H1 (cell line): ENCODE measurements at regions of chr15 and their contacts with region 1.

Region 1: GRCh38 chr15:71386448-71387236 is 271.4 kb downstream of the THSD4 start:
- DNase-seq: no peak
- H3K4me3 ChIP-seq: peak overlapping the region in 1 of 4 experiments; percentile 30; a peak in 3 of 8 replicates
- H3K27ac ChIP-seq: peak overlapping the region; percentile 5; the same call in 1 of the 2 replicates
- H3K4me1 ChIP-seq: peaks cover 15 to 24% (median 19%) of the 10 kb centered on the region in 4 experiments; a peak in 6 of 7 replicates
- H3K27me3 ChIP-seq: no peaks in the 10 kb centered on the region
- CTCF ChIP-seq: peak in 1 of 3 experiments; percentile 42; a peak in 1 of 4 replicates
- EP300 ChIP-seq: peak in 1 of 2 experiments; percentile 47; a peak in 1 of 3 replicates
- POLR2A ChIP-seq: no peak; a peak in 1 of 3 replicates
- RAD21 ChIP-seq: peak; percentile 72 to 75

Region 2: GRCh38 chr15:71349736-71350526 is 36.7 kb before region 1 on chr15:
- CTCF ChIA-PET with region 1: no interaction called
- POLR2A ChIA-PET with region 1: no interaction called
- DNase-seq: no peak
- H3K4me3 ChIP-seq: no peak overlapping the region
- H3K27ac ChIP-seq: no peak overlapping the region
- H3K4me1 ChIP-seq: peaks cover 0 to 7% (median 3%) of the 10 kb centered on the region in 4 experiments; a peak in 4 of 7 replicates
- H3K27me3 ChIP-seq: no peaks in the 10 kb centered on the region
- CTCF ChIP-seq: no peak
- EP300 ChIP-seq: no peak
- POLR2A ChIP-seq: no peak
- RAD21 ChIP-seq: no peak

Region 3: GRCh38 chr15:71400294-71400693 is 13.7 kb after region 1 on chr15:
- CTCF ChIA-PET with region 1: interaction called, 19 read pairs
- POLR2A ChIA-PET with region 1: interaction called, 5 read pairs
- DNase-seq: no peak
- H3K4me3 ChIP-seq: no peak overlapping the region
- H3K27ac ChIP-seq: no peak overlapping the region
- H3K4me1 ChIP-seq: no peaks in the 10 kb centered on the region
- H3K27me3 ChIP-seq: no peaks in the 10 kb centered on the region
- CTCF ChIP-seq: no peak
- EP300 ChIP-seq: no peak
- POLR2A ChIP-seq: no peak
- RAD21 ChIP-seq: no peak